ENCODE measurements at regions of chr9 and their contacts with region 1.

Region 1: DNA sequence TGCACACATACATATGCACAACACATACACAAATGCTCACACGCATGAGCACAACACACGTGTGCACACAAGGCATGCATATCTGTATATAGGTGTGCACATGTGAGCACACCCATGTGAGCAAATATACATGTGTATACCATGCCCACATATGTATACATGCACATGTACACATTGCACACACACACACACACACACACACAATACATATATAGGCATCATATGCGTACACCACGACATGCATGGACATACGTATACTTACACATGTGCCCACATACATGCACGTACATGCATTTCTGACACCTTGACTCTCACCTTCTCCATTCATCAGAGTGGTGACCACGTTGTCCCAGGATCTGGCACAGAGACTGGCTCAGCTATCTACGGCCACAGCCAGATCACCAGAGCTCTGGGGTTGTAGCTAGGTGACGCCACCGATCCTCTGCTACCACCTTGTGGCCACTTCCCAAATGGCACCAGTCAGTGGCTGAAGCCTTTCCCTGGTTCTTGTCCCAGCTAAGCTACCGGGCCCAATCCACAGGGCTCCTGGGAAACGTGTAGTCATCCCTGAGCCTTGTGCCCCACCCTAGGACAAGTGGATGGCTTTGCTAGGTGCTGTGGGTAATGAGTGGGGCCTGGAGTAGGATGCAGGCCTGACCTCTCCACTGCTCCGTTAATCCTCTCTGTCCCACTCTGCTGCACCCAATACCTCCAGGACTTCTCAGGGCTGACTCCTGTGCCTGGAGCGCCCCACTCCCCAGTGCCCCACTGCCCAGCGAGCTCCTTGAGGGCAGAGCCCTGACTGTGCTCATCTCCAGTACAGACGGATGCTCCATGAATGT is 194.4 kb downstream of the RGS3 start:
- DNase-seq: peak; percentile 75
- ATAC-seq: peak; percentile 95
- H3K4me3 ChIP-seq: no peak overlapping the region
- H3K27ac ChIP-seq: no peak overlapping the region
- H3K4me1 ChIP-seq: peaks cover 0 to 15% of the 10 kb centered on the region in 2 experiments; a peak in 1 of 4 replicates
- H3K27me3 ChIP-seq: peaks cover 14% of the 10 kb centered on the region; the same call in 1 of the 2 replicates
- CTCF ChIP-seq: peak; percentile 87 to 96 (median 95)
- POLR2A ChIP-seq: no peak
- RAD21 ChIP-seq: peak; percentile 98

Region 2: DNA sequence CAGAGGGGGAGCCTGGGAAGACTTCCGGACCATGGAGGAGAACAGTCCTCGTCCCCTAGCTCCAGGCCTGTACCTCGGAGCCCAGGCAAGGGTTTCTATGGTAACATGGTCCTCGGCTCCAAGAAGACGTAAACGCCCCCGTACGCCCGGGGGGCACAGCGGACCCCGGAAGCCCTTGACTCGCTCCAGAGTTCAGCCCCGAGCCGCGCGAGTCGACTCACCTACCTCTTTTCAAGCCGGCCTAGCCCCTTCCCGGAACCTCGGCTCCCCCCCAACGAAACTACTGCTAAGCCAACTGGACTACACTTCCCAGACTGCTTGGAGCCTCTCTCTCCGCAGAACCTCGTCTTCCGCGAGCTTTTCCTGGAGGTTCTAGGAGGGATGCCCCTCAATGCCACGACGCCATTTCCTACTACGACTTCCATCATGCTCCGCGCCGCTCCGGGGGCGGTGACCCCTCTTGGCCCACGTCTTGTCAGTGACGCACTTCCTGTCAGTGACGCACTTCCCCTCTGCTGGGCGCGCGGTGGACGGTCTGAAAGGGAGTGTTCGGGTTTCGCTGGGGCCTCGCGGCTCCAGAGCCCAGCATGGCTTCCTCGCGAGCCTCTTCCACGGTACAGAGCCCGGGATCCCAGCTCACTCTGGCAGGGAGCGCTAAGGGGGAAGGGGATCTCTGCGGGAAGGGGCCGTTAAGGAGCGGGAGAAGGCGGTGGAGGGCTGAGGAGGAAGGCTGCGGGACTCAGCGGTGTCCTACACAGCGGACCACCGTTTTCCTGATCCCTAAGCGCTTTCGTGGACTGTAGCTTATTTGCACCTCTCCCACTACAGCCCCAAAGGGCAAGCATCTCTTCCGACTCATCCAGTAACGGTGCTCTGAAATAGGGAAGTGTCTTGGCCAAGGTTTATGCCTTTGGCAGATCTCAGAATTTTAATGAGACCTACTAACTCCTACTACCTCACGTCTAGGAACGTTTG is 382.5 kb before region 1 on chr9 and contains the starts of genes CDC26 and PRPF4:
- CTCF ChIA-PET with region 1: interaction called, 25 read pairs
- POLR2A ChIA-PET with region 1: interaction called, 4 read pairs
- RAD21 ChIA-PET with region 1: interaction called, 3 to 4 read pairs
- intact Hi-C with region 1: loop called (anchors 1 kb)
- DNase-seq: peak; percentile 95
- ATAC-seq: peak; percentile 86
- H3K4me3 ChIP-seq: peak within 1 kb of the TSS; percentile 71 to 73
- H3K27ac ChIP-seq: peak within 1 kb of the TSS; percentile 70
- H3K4me1 ChIP-seq: peaks cover 3 to 14% of the 10 kb centered on the region in 2 experiments; a peak in 3 of 4 replicates
- H3K27me3 ChIP-seq: no peaks in the 10 kb centered on the region
- CTCF ChIP-seq: no peak
- POLR2A ChIP-seq: peak; percentile 92
- RAD21 ChIP-seq: no peak
- total RNA-seq, gene CDC26: 22.0 TPM
- total RNA-seq, gene PRPF4: 53.9 TPM

Region 3: DNA sequence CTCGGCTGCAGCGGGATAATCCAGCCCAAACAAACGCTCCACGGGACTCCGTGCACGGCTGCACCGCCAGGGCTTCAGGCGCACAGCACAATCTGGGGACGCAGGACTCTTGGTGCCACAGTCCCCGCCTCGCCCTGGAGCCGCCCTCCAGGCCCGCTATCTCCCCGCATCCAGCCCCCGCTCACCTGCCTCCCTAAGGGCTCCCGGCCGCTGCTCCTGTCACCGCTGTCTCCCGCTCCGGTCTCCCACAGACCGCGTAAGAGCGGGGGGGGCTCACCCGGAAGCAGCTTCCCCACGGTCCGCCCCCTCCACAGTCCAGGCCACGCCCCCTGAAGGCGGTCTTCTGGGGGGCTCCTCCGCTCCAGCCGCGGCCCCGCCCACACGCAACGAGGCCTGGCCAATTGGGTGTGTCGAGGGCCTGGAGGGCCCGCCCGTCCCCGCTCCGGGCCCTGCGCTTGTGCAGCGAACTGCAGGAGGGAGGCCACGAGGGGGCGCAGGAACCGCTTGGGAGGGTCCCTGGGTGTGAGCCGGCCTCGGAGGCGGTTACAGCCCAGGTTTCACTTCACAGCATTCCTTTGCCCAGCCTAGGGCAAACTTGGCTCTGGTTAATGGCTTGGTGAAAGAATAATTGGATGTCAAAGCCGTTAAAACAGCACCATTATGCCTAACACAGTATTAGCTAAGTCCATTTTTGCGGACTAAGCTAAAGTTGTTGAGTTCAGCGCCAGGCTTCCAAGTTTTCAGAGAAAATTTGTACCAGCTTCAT is 256.7 kb before region 1 on chr9 and contains the start of gene ALAD:
- CTCF ChIA-PET with region 1: interaction called, 17 read pairs
- POLR2A ChIA-PET with region 1: no interaction called
- RAD21 ChIA-PET with region 1: interaction called in 1 of 2 experiments, 5 read pairs
- intact Hi-C with region 1: loop called (anchors 1 kb)
- DNase-seq: peak; percentile 94
- ATAC-seq: peak; percentile 96
- H3K4me3 ChIP-seq: peak within 1 kb of the TSS; percentile 76 to 86
- H3K27ac ChIP-seq: peak within 1 kb of the TSS; percentile 40
- H3K4me1 ChIP-seq: peaks cover 8 to 12% of the 10 kb centered on the region in 2 experiments
- H3K27me3 ChIP-seq: no peaks in the 10 kb centered on the region
- CTCF ChIP-seq: peak in 2 of 3 experiments; percentile 88 to 96; a peak in 4 of 6 replicates
- POLR2A ChIP-seq: peak; percentile 41
- RAD21 ChIP-seq: no peak
- total RNA-seq, gene ALAD: 14.0 TPM

Region 4: DNA sequence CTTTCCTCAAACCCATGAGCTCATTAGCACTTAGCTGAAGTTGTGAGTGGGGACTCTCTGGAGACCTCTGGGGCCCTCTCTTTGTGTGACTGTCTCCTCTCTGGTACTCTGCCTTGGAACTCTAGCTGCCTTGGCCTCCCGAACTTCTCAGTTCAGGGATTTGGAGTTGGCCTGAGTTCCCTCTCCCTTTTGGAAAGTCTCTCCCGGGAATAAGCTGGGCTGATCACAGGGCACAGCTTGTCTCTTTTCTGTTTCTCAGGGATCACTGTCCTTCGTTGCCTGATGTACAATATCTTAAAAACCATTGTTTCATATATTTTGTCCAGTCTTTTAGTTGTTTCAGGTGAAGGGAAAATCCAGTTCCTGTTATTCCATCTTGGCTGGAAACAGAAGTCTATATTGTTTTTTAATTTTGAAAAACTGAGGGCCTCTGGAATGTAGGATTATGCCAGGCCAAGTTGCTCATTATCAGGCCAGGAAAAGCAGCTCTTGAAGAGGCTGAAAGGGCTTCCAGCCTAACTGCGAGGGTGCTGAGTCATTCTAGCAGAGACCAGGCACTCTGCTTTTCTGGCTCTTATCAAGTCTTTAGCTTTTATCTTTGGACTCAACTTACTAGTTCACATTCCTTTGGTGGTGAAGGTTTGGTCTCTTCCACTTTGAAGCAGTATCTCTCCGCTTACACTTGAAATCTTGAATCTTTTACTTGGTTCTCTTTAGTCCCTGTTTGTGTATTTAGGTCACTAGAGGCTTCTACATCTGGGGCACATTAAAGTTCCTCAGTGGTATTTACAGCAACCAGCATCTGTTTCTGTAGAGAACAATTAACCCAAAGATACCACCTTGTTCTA is 202.8 kb before region 1 on chr9:
- CTCF ChIA-PET with region 1: interaction called, 10 read pairs
- POLR2A ChIA-PET with region 1: interaction called, 4 read pairs
- RAD21 ChIA-PET with region 1: no interaction called
- intact Hi-C with region 1: no loop called
- DNase-seq: peak; percentile 16
- ATAC-seq: peak; percentile 79
- H3K4me3 ChIP-seq: no peak overlapping the region
- H3K27ac ChIP-seq: peak overlapping the region; percentile 67
- H3K4me1 ChIP-seq: peaks cover 18 to 23% of the 10 kb centered on the region in 2 experiments
- H3K27me3 ChIP-seq: no peaks in the 10 kb centered on the region
- CTCF ChIP-seq: no peak
- POLR2A ChIP-seq: no peak
- RAD21 ChIP-seq: no peak

Region 5: GRCh38 chr9:113591001-113591898 is 66.7 kb before region 1 on chr9:
- CTCF ChIA-PET with region 1: interaction called, 287 read pairs
- POLR2A ChIA-PET with region 1: interaction called, 6 read pairs
- RAD21 ChIA-PET with region 1: interaction called, 28 to 68 read pairs
- intact Hi-C with region 1: loop called (anchors 1 kb)
- DNase-seq: no peak
- ATAC-seq: peak; percentile 78
- H3K4me3 ChIP-seq: no peak overlapping the region
- H3K27ac ChIP-seq: no peak overlapping the region
- H3K4me1 ChIP-seq: peaks cover 9 to 16% of the 10 kb centered on the region in 2 experiments
- H3K27me3 ChIP-seq: no peaks in the 10 kb centered on the region
- CTCF ChIP-seq: peak; percentile 90 to 96 (median 91)
- POLR2A ChIP-seq: no peak
- RAD21 ChIP-seq: peak; percentile 98

Region 6: DNA sequence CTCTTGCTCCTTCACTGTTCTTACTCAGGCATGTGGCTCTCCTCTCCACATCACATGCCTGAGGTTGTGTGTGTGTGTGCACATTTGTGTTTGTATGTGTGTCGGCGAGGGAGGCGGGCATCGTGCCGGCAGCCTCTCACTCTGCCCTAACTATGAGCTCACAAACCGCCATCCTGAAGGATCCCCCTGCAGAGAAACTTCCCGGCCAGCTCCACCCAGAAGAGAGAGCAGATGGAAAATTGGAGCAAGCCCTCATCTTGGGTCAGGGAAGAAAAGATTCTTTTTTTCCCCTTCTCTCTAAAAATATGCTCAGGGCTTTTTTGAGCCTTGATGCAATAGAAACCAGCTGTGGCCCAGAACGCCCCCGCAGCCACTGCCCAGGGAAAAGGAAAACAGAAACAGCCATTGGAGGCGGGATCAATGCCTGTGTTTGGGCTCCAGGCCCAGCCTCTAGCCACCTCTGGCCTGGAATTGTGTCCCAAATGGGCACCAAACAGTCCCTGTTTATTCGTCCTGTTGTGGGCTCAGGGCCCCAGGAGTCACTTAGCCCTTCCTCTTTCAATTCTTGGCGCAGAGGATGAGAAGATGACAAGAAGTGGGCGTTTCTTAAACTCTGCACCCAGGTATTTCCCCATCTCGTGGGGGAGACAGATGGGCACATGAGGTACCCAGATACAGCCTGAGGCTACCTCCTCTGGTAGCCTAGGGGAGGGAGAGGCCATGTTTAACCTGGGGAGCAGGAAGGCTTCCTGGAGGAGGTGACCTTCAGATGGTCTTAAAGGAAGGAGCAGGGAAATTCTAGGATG is 42.9 kb before region 1 on chr9:
- CTCF ChIA-PET with region 1: no interaction called
- POLR2A ChIA-PET with region 1: no interaction called
- RAD21 ChIA-PET with region 1: no interaction called
- intact Hi-C with region 1: no loop called
- DNase-seq: no peak
- ATAC-seq: no peak
- H3K4me3 ChIP-seq: no peak overlapping the region
- H3K27ac ChIP-seq: no peak overlapping the region
- H3K4me1 ChIP-seq: peaks cover 11 to 14% of the 10 kb centered on the region in 2 experiments
- H3K27me3 ChIP-seq: no peaks in the 10 kb centered on the region
- CTCF ChIP-seq: no peak
- POLR2A ChIP-seq: no peak
- RAD21 ChIP-seq: no peak

Region 7: DNA sequence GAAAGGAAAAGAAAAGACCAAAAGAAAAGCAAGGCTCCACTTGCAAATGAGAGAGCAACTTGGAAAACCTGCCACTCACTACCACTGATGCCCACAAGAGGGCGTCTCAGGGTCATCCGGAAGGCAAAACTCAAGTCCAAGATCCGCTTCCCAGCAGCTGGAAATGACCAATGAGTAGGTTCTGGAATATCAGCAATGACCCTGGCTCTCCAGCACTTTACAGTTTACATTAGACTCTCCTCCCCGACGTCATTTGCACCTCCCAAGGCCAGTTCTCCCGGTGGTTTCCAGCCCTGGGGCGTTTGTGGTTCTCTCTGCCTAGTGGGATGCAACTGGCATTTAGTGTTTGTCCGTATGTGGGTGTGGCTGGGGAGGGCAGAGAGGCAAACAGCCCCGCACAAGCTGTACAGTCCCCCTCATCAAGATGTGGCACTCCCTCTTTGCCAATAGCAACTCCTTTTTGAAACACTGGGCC is 24.4 kb after region 1 on chr9:
- CTCF ChIA-PET with region 1: interaction called, 13 read pairs
- POLR2A ChIA-PET with region 1: no interaction called
- RAD21 ChIA-PET with region 1: no interaction called
- intact Hi-C with region 1: no loop called
- DNase-seq: peak; percentile 83
- ATAC-seq: peak; percentile 85
- H3K4me3 ChIP-seq: peak overlapping the region in 1 of 2 experiments; percentile 24; a peak in 2 of 4 replicates
- H3K27ac ChIP-seq: no peak overlapping the region
- H3K4me1 ChIP-seq: peaks cover 0 to 6% of the 10 kb centered on the region in 2 experiments; a peak in 2 of 4 replicates
- H3K27me3 ChIP-seq: peaks cover 15% of the 10 kb centered on the region
- CTCF ChIP-seq: peak; percentile 74 to 96 (median 93)
- POLR2A ChIP-seq: no peak
- RAD21 ChIP-seq: peak; percentile 89

Region 8: GRCh38 chr9:113844466-113844865 is 186.5 kb after region 1 on chr9:
- CTCF ChIA-PET with region 1: no interaction called
- POLR2A ChIA-PET with region 1: no interaction called
- RAD21 ChIA-PET with region 1: no interaction called
- intact Hi-C with region 1: no loop called
- DNase-seq: no peak
- ATAC-seq: no peak
- H3K4me3 ChIP-seq: no peak overlapping the region
- H3K27ac ChIP-seq: no peak overlapping the region
- H3K4me1 ChIP-seq: no peaks in the 10 kb centered on the region
- H3K27me3 ChIP-seq: no peaks in the 10 kb centered on the region
- CTCF ChIP-seq: no peak
- POLR2A ChIP-seq: no peak
- RAD21 ChIP-seq: no peak

Measured in HCT116 (cell line).